ENCODE measurements at regions of chr16 and their contacts with region 1.

Region 1: DNA sequence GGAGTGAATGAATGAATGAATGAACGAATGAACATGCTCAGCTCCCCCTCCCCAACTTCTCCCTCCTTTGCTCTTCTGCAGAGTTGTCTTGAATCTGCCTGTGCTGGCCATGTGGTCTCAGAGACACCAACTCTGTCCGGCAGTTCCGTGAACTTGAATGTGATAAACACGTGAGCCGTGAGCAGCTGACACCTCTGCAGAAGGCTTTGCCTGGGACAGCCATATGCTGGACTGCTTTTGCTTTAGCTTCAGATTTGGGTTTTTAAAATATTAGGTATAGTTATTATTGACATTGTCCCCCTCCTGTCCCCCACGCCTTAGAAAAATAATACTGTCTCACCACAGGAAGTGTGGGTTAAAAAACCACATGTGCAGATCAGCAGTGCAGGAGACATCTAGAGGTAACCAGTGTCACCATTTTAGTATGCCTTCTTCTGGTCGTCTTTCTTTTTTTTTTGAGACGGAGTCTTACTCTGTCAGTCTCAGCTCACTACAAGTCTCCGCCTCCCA is 83.8 kb downstream of the ABCC1 start:
- DNase-seq: peak in 1 of 4 experiments; percentile 16
- ATAC-seq: no peak
- H3K4me3 ChIP-seq: no peak overlapping the region
- H3K27ac ChIP-seq: no peak overlapping the region
- H3K4me1 ChIP-seq: peaks cover 0 to 5% of the 10 kb centered on the region in 2 experiments; a peak in 2 of 5 replicates
- H3K27me3 ChIP-seq: no peaks in the 10 kb centered on the region
- CTCF ChIP-seq: no peak
- EP300 ChIP-seq: no peak
- POLR2A ChIP-seq: no peak
- RAD21 ChIP-seq: no peak

Region 2: DNA sequence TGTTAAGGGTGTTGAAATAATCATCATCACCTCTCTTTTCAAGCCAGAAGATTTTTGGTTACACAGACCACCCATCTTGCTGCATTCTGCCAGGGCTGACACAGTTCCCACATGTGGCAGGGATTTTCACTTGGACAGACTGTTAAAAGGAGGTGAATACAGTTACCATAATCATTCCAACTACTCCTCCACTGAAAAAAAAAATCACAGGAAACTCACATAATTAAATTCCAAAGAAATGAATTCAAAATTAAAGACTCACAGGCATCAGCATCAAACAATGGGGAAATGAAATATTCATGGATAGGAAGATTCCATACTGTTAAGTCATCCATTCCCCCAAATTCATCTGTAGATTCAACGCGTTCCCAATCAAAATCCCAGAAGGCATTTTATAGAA is 1752.7 kb before region 1 on chr16:
- CTCF ChIA-PET with region 1: no interaction called
- POLR2A ChIA-PET with region 1: no interaction called
- in situ Hi-C with region 1: no loop called
- intact Hi-C with region 1: no loop called
- DNase-seq: no peak
- ATAC-seq: no peak
- H3K4me3 ChIP-seq: no peak overlapping the region
- H3K27ac ChIP-seq: no peak overlapping the region
- H3K4me1 ChIP-seq: peaks cover 0 to 3% of the 10 kb centered on the region in 2 experiments; a peak in 3 of 5 replicates
- H3K27me3 ChIP-seq: no peaks in the 10 kb centered on the region
- CTCF ChIP-seq: no peak
- EP300 ChIP-seq: no peak
- POLR2A ChIP-seq: no peak
- RAD21 ChIP-seq: no peak

Region 3: DNA sequence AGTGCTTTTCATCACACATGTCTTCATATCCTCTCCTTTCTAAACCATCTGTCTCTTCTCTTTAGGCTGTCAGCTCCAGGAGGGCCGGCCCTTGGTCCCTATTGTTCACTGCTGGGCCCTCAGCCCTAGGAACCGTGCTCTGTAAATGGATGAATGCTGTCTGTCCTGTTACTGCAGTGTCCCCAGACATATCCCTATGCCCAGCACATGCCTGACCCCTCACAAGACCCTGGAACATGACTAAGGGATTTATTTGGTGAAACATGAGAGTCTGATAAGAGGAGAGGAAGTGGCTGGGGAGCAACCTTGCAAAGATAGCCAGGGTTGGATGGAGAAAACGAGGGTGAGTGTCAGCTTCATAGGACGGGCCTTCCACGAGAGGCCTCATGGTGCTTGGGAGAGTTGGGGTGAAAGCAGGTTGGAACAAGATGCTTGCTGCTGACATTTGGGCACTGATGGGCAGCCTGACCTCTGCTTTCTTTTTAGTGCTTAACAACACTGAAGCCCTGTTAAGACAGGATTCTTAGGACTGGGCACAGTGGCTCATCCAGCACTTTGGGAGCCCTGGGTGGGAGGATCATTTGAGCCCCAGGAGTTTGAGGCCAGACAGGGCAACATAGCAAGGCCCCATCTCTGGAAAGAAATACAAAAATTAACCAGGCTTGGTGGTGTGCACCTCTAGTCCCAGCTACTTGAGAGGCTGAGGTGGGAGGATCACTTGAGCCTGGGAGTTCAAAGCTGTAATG is 44.8 kb before region 1 on chr16:
- CTCF ChIA-PET with region 1: no interaction called
- POLR2A ChIA-PET with region 1: no interaction called
- in situ Hi-C with region 1: no loop called
- intact Hi-C with region 1: loop called (anchors 2 kb)
- DNase-seq: peak; percentile 66 to 94 (median 78)
- ATAC-seq: peak; percentile 86
- H3K4me3 ChIP-seq: no peak overlapping the region
- H3K27ac ChIP-seq: peak overlapping the region; percentile 90
- H3K4me1 ChIP-seq: peaks cover 39 to 43% of the 10 kb centered on the region in 2 experiments
- H3K27me3 ChIP-seq: no peaks in the 10 kb centered on the region
- CTCF ChIP-seq: no peak
- EP300 ChIP-seq: peak; percentile 91
- POLR2A ChIP-seq: peak; percentile 52; the same call in 1 of the 2 replicates
- RAD21 ChIP-seq: no peak

Region 4: DNA sequence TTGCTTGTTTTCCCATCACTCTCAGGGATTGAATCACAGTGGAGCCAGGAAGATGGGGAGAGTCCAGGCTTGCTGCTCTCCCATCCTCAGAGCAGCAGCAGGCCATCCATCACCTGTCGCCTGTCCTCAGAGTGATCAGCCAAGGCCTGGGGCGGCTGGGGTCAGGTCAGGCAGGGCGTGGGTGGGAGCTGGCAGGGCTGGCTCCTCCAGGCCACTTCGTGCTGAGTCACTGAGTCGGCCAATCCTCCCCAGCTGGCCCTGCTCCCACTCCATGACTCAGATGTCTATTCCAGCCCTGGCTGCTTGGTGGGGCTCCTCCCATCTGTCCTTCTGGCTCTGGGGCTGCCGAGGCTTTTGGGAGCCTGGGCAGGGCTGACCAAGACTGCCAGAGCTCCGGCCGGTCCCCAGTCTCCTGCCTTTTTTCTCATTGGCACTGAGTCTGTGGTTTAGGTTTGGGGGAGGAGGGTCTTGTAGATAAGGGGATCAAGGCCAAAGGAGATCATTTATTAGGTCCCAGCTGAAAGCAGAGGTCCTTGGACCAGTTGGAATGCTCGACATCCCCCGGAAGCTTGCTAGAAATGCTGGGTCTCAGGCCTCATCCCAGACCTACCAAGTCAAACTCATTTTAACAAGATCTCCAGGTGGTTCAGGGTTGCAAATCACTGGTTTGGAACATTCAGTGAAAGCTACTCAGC is 11.1 kb before region 1 on chr16:
- CTCF ChIA-PET with region 1: no interaction called
- POLR2A ChIA-PET with region 1: interaction called, 26 read pairs
- in situ Hi-C with region 1: no loop called
- intact Hi-C with region 1: no loop called
- DNase-seq: peak; percentile 95 to 98 (median 95)
- ATAC-seq: peak; percentile 98
- H3K4me3 ChIP-seq: peak overlapping the region; percentile 27; the same call in 1 of the 2 replicates
- H3K27ac ChIP-seq: peak overlapping the region; percentile 100
- H3K4me1 ChIP-seq: peaks cover 45 to 50% of the 10 kb centered on the region in 2 experiments
- H3K27me3 ChIP-seq: no peaks in the 10 kb centered on the region
- CTCF ChIP-seq: peak in 1 of 3 experiments; percentile 3; a peak in 1 of 6 replicates
- EP300 ChIP-seq: peak; percentile 91
- POLR2A ChIP-seq: peak; percentile 75
- RAD21 ChIP-seq: peak in 1 of 2 experiments; percentile 44; a peak in 2 of 4 replicates

Region 5: DNA sequence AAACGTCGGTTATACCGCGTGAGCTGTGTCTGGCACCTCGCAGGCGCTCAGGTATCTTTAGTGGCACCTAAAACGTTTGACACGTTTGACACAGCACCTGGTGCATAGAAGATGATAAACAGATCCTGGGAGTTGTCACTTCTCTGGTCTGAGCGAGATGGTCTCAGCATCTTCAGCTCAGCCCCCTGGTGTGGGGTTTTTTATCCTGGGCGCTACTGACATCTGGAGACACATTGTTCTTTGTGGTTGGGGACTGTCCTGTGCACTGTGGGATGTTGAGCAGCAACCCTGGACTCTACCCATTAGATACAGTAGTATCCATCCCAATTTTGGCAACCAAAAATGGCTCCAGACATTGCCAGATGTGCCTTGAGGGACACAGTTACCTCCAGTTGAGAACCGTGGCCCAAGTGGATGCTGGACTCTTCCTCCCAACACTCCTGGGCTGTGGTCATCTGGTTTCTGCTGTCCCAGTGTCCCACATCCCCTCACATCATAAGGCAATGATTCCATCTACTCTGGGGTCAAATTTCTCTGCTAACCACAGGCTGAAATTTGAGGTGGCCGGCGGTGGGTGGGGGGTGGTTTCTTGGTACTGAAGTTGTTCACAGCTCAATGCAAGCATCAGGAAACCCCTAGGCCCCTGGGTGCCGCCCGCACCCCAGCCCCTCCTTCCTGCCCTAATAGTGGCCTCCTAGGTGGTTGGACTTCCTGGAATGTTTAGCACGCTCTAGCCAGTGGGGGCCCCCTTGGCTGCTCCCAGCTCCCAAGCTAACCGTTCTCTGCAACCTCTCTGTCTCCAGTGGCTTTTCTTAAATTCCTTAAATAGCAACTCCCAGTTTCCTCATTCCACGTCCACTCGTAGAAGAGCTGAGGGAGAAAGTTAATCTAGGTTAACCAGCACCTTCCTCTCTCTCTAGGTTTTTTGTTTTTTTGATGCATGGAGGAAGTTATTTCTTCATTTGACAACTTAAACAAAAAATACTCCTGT is 40.9 kb after region 1 on chr16:
- CTCF ChIA-PET with region 1: no interaction called
- POLR2A ChIA-PET with region 1: no interaction called
- in situ Hi-C with region 1: no loop called
- intact Hi-C with region 1: no loop called
- DNase-seq: peak in 1 of 4 experiments; percentile 33
- ATAC-seq: peak; percentile 75
- H3K4me3 ChIP-seq: no peak overlapping the region
- H3K27ac ChIP-seq: peak overlapping the region; percentile 9; the same call in 1 of the 3 replicates
- H3K4me1 ChIP-seq: peaks cover 0 to 7% of the 10 kb centered on the region in 2 experiments; a peak in 2 of 5 replicates
- H3K27me3 ChIP-seq: no peaks in the 10 kb centered on the region
- CTCF ChIP-seq: no peak
- EP300 ChIP-seq: no peak
- POLR2A ChIP-seq: no peak
- RAD21 ChIP-seq: 0 out of 4 replicates have a peak, but pooled peaks of 1 of the 2 experiments have one; percentile 4

Measured in K562 (cell line).